Breast epithelium (tissue), 4 donors: ENCODE measurements at regions of chrX and their contacts with region 1.

Region 1: DNA sequence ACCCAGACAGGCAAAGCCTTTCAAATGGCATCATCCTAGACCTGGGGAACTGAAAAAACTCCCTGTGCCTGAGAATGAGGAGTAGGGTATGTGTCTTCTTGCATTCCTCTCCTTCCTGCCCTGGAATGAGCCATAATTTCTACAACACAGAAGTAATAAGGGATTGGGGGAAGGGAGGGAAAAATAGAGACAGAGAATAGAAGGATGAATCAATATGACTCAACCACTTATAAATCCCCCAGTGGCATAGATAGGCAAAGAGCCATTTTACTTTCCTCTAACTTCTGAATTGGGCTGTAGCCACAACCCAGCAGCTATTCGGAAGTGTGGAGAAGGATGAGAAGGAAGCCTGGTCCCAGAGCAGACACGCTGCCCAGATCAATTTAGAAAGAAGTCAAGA is 99.9 kb downstream of the NHS start:
- DNase-seq: no peak
- H3K4me3 ChIP-seq: no peak overlapping the region
- H3K27ac ChIP-seq: no peak overlapping the region
- H3K4me1 ChIP-seq: no peaks in the 10 kb centered on the region
- H3K27me3 ChIP-seq: peaks cover 0 to 16% of the 10 kb centered on the region in 2 donors
- CTCF ChIP-seq: no peak
- POLR2A ChIP-seq: no peak

Region 2: GRCh38 chrX:16946361-16946964 is 528.4 kb before region 1 on chrX and contains the start of gene REPS2:
- intact Hi-C with region 1: loop called (anchors 5 kb)
- DNase-seq: peak; percentile 86 to 87
- H3K4me3 ChIP-seq: peak within 1 kb of the TSS; percentile 57 to 79 (median 65)
- H3K27ac ChIP-seq: peak within 1 kb of the TSS; percentile 48 to 65
- H3K4me1 ChIP-seq: no peaks in the 10 kb centered on the region
- H3K27me3 ChIP-seq: peaks cover 0 to 16% of the 10 kb centered on the region in 2 donors
- CTCF ChIP-seq: no peak
- POLR2A ChIP-seq: no peak
- total RNA-seq, gene REPS2: 9.6 to 21.4 (median 13.1) TPM